Dorsolateral prefrontal cortex (tissue), 120 donors: ENCODE measurements at regions of chr1 and their contacts with region 1.

Region 1: DNA sequence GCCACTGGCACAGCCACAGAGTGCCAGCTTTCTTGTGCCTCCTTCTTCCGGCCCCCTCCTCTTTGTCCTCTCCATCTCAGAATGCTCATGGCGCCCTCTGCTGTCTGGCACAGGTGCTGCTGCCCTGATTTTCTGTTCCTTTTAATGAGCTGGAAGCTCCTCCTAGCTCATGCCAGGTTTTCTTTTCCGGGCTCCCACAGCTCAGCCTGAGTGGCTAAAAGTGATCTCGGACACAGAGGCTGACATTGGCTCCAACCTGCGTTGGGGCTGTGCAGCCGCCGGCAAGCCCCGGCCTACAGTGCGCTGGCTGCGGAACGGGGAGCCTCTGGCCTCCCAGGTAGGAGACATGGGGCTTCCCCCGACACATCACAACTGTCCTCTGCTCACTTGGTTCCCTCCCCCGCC is 18.7 kb downstream of the CNTN2 start:
- DNase-seq: peak; percentile 83 to 95 (median 89)
- H3K4me3 ChIP-seq: peak overlapping the region in 13 of 59 donors; percentile 3 to 39 (median 31)
- H3K27ac ChIP-seq: peak overlapping the region in 58 of 59 donors; percentile 33 to 100 (median 81)
- H3K27me3 ChIP-seq: no peaks in the 10 kb centered on the region
- CTCF ChIP-seq: peak; percentile 68 to 96 (median 89)

Region 2: DNA sequence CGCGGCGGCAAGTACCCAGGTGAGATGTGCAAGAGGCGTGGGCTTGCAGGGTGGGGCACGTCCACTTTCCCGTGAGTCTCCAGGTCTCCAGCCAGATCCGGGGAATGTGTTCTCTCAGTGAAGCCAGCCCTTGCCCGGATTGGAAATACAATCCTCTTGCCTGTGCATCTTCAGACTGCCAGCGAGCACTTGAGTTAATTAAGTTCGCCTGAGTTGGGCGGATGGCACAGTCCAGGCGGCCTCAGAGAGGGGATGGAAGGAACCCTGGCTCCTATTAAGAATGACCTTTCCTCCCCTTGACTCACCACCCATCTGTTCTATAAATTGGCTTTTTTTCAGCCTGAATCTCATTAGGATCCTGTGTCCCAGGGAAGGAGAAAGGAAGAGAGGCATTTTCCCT is 52.0 kb before region 1 on chr1:
- intact Hi-C with region 1: loop called in 1 of 2 experiments (anchors 5 kb)
- DNase-seq: no peak
- H3K4me3 ChIP-seq: no peak overlapping the region
- H3K27ac ChIP-seq: peak overlapping the region in 22 of 59 donors; percentile 3 to 77 (median 36)
- H3K27me3 ChIP-seq: no peaks in the 10 kb centered on the region
- CTCF ChIP-seq: no peak